ENCODE measurements at regions of chr1 and their contacts with region 1.

Region 1: GRCh38 chr1:155729031-155729898 is 40.4 kb downstream of the DAP3 start:
- DNase-seq: peak; percentile 80
- H3K4me3 Mint-ChIP-seq: no peak overlapping the region
- H3K27ac Mint-ChIP-seq: peak overlapping the region; percentile 39
- H3K4me1 Mint-ChIP-seq: no peaks in the 10 kb centered on the region
- H3K27me3 Mint-ChIP-seq: no peaks in the 10 kb centered on the region
- CTCF ChIP-seq: peak; percentile 59

Region 2: GRCh38 chr1:155744711-155745283 is 15.5 kb after region 1 on chr1:
- CTCF ChIA-PET with region 1: interaction called, 20 read pairs
- POLR2A ChIA-PET with region 1: interaction called, 10 read pairs
- intact Hi-C with region 1: no loop called
- DNase-seq: no peak
- H3K4me3 Mint-ChIP-seq: peak overlapping the region; percentile 82
- H3K27ac Mint-ChIP-seq: peak overlapping the region; percentile 85
- H3K4me1 Mint-ChIP-seq: no peaks in the 10 kb centered on the region
- H3K27me3 Mint-ChIP-seq: no peaks in the 10 kb centered on the region
- CTCF ChIP-seq: no peak

Region 3: GRCh38 chr1:155776404-155776803 is 47.1 kb after region 1 on chr1:
- CTCF ChIA-PET with region 1: no interaction called
- POLR2A ChIA-PET with region 1: no interaction called
- intact Hi-C with region 1: no loop called
- DNase-seq: peak; percentile 56
- H3K4me3 Mint-ChIP-seq: no peak overlapping the region
- H3K27ac Mint-ChIP-seq: no peak overlapping the region
- H3K4me1 Mint-ChIP-seq: peaks cover 10% of the 10 kb centered on the region
- H3K27me3 Mint-ChIP-seq: no peaks in the 10 kb centered on the region
- CTCF ChIP-seq: no peak

Region 4: DNA sequence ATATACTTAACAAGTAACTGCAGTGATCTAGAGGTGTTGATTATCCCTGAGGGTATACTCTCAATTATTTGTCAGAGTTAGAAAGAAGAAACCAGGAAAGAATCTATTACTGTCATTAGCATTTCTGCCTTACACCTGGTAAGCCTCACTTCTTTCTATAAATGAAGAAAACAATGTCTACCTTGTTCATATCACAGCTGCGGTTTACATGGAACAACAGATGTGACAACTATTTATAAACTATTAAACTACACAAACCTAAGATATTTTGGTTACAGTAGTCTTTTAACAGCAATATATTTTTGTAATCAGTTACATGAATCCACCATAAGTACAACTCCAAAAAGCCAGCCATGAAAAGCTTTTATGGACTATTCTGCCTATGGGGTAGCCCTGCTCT is 87.1 kb after region 1 on chr1:
- CTCF ChIA-PET with region 1: no interaction called
- POLR2A ChIA-PET with region 1: no interaction called
- intact Hi-C with region 1: no loop called
- DNase-seq: no peak
- H3K4me3 Mint-ChIP-seq: no peak overlapping the region
- H3K27ac Mint-ChIP-seq: peak overlapping the region; percentile 68
- H3K4me1 Mint-ChIP-seq: no peaks in the 10 kb centered on the region
- H3K27me3 Mint-ChIP-seq: no peaks in the 10 kb centered on the region
- CTCF ChIP-seq: no peak

Region 5: GRCh38 chr1:155913969-155914757 is 184.9 kb after region 1 on chr1:
- CTCF ChIA-PET with region 1: no interaction called
- POLR2A ChIA-PET with region 1: no interaction called
- intact Hi-C with region 1: no loop called
- DNase-seq: no peak
- H3K4me3 Mint-ChIP-seq: no peak overlapping the region
- H3K27ac Mint-ChIP-seq: no peak overlapping the region
- H3K4me1 Mint-ChIP-seq: peaks cover 27% of the 10 kb centered on the region
- H3K27me3 Mint-ChIP-seq: no peaks in the 10 kb centered on the region
- CTCF ChIP-seq: no peak

Region 6: DNA sequence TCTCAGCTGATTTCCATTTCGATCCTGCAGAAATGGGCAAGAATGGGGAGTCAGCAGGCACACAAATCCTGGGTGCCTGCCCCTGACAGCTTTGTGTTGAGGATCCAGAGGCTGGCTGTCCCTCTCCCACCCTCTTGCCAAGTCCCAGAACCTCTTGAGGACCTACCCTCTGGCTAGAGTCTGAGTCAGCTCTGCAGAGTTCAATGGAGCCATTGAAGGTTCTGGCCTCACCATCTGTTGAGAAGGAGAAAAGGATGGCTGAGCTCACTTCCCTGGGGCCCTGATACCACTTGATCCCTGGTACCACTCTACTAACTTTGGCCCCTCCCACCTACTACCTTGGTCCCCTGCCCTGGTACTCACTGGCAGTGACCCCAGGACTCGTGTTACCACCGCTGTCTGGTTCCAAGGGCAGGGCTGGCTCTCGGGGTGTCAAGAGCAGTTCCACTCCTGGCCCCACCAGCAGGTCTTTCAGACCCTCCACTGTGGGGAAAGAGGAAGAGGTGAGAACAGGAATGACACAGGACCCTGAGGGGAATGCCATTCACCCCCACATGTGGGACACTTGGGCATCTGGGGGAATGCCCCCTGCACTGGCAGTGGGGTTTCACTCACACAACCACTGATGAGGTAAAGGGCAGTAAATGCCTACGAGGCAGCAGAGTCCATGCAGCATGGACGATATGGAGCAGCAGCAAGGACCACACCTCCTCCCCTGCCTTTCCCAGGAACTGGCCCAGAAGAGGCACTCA is 222.7 kb after region 1 on chr1:
- CTCF ChIA-PET with region 1: no interaction called
- POLR2A ChIA-PET with region 1: no interaction called
- intact Hi-C with region 1: no loop called
- DNase-seq: no peak
- H3K4me3 Mint-ChIP-seq: no peak overlapping the region
- H3K27ac Mint-ChIP-seq: peak overlapping the region; percentile 19
- H3K4me1 Mint-ChIP-seq: no peaks in the 10 kb centered on the region
- H3K27me3 Mint-ChIP-seq: no peaks in the 10 kb centered on the region
- CTCF ChIP-seq: no peak

Measured in MCF 10A (cell line).